IMR-90 (cell line): ENCODE measurements at regions of chr3 and their contacts with region 1.

Region 1: DNA sequence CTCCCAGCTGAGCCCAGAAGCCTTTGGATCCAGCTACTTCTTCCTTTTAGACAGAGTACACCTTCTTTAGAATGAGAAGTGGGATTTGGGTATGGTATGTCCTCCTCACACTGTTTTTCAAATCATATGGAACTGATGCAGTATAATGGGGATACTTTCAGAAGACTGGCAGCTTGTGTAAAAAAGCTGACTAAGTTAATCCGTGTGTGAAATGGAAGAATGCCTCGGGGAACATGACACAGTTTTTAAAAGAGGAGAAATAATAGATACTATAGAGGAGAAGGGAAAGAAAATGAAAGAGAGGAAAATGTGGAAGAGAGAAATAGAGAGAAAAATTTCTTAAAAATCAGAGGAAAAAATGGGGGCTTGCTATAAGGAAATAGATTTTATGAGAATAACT is 47.7 kb downstream of the TUSC7 start:
- DNase-seq: no peak
- ATAC-seq: no peak
- H3K4me3 ChIP-seq: no peak overlapping the region
- H3K27ac ChIP-seq: no peak overlapping the region
- H3K4me1 ChIP-seq: no peaks in the 10 kb centered on the region
- H3K27me3 ChIP-seq: no peaks in the 10 kb centered on the region
- CTCF ChIP-seq: no peak
- POLR2A ChIP-seq: no peak
- RAD21 ChIP-seq: no peak

Region 2: DNA sequence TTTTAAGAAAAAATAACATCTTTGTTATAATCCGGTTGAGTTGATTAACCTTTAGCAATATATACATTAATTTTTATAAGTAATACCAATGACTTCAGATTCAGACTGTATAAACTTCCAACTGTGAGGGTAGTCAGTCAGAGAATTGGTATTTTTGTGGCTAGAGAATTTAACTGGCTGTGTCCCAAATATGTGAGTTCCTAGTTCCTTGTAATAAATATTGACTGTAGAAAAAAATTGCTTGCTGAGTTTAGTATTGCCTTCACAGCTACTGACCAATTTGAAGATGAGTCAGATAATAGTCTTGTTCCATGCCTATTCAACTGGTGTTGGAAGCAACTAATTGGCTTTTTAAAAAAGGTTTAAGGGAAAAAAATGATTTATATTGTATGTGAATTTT is 923.2 kb before region 1 on chr3:
- CTCF ChIA-PET with region 1: no interaction called
- POLR2A ChIA-PET with region 1: no interaction called
- dilution Hi-C with region 1: no loop called
- in situ Hi-C with region 1: no loop called
- intact Hi-C with region 1: loop called (anchors 5 kb)
- DNase-seq: peak; percentile 91
- ATAC-seq: peak; percentile 87
- H3K4me3 ChIP-seq: no peak overlapping the region
- H3K27ac ChIP-seq: no peak overlapping the region
- H3K4me1 ChIP-seq: peaks cover 10% of the 10 kb centered on the region
- H3K27me3 ChIP-seq: no peaks in the 10 kb centered on the region
- CTCF ChIP-seq: no peak
- POLR2A ChIP-seq: no peak
- RAD21 ChIP-seq: no peak

Region 3: DNA sequence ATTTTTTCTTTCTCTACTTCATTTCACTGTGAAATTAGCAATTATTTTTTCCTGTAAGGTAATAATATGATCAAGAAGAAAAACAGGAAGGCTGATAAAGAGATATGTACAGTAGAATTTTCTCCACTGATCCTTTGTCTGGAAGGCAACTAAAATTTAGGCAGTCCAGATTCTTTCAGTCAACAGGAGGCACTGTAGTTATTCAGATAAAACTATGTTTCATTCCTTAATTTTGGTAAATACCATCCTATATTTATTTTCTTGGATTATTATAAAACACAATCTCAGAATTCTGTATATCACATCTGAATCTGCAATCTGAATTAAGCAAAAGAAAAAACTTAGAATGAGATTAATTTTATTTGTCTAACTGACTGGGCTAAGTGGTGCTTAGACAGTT is 655.3 kb before region 1 on chr3:
- CTCF ChIA-PET with region 1: no interaction called
- POLR2A ChIA-PET with region 1: no interaction called
- dilution Hi-C with region 1: no loop called
- in situ Hi-C with region 1: no loop called
- intact Hi-C with region 1: loop called (anchors 5 kb)
- DNase-seq: no peak
- ATAC-seq: no peak; the same call in 1 of the 2 replicates
- H3K4me3 ChIP-seq: no peak overlapping the region
- H3K27ac ChIP-seq: no peak overlapping the region
- H3K4me1 ChIP-seq: 0 out of 2 replicates have a peak, but pooled peaks cover 2% of the 10 kb centered on the region
- H3K27me3 ChIP-seq: no peaks in the 10 kb centered on the region
- CTCF ChIP-seq: peak; percentile 22; the same call in 1 of the 2 replicates
- POLR2A ChIP-seq: no peak
- RAD21 ChIP-seq: no peak

Region 4: GRCh38 chr3:116140100-116140689 is 617.1 kb before region 1 on chr3:
- CTCF ChIA-PET with region 1: no interaction called
- POLR2A ChIA-PET with region 1: no interaction called
- dilution Hi-C with region 1: no loop called
- in situ Hi-C with region 1: loop called (anchors 5 kb)
- intact Hi-C with region 1: loop called (anchors 1 kb)
- DNase-seq: peak; percentile 47
- ATAC-seq: no peak
- H3K4me3 ChIP-seq: no peak overlapping the region
- H3K27ac ChIP-seq: no peak overlapping the region
- H3K4me1 ChIP-seq: no peaks in the 10 kb centered on the region
- H3K27me3 ChIP-seq: no peaks in the 10 kb centered on the region
- CTCF ChIP-seq: peak; percentile 79
- POLR2A ChIP-seq: no peak
- RAD21 ChIP-seq: peak; percentile 66

Region 5: GRCh38 chr3:116614795-116615362 is 142.4 kb before region 1 on chr3:
- CTCF ChIA-PET with region 1: no interaction called
- POLR2A ChIA-PET with region 1: no interaction called
- dilution Hi-C with region 1: no loop called
- in situ Hi-C with region 1: no loop called
- intact Hi-C with region 1: loop called (anchors 5 kb)
- DNase-seq: peak; percentile 26
- ATAC-seq: peak; percentile 75
- H3K4me3 ChIP-seq: no peak overlapping the region
- H3K27ac ChIP-seq: no peak overlapping the region
- H3K4me1 ChIP-seq: no peaks in the 10 kb centered on the region
- H3K27me3 ChIP-seq: no peaks in the 10 kb centered on the region
- CTCF ChIP-seq: peak; percentile 35
- POLR2A ChIP-seq: no peak
- RAD21 ChIP-seq: no peak